ENCODE measurements at regions of chr1 and their contacts with region 1.

Region 1: GRCh38 chr1:43994897-43995335 is 3.5 kb downstream of the CCDC24 start:
- DNase-seq: no peak
- H3K4me3 ChIP-seq: no peak overlapping the region
- H3K27ac ChIP-seq: peak overlapping the region in 23 of 59 donors; percentile 10 to 78 (median 37)
- H3K27me3 ChIP-seq: no peaks in the 10 kb centered on the region
- CTCF ChIP-seq: peak in 24 of 56 donors; percentile 9 to 41 (median 22)

Region 2: DNA sequence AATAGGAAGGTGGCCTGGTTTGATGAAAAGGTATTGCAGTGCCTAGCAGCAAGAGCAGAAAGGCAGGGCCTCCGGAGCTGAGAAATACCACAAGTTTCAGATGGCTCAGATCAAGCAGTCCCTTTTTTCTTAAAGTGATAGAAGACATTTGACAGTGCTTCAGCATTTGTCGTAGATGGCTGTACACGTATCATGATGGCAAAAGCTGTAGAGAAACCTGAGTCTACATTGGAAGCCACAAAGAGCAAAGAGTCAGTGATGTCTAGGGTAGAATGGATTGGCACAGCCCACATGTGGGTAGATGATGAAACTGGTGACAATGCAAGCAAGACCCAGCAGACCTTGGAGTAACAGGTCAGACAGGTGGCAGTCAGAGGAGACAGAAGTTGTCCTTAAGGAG is 162.7 kb before region 1 on chr1:
- intact Hi-C with region 1: no loop called
- DNase-seq: no peak
- H3K4me3 ChIP-seq: no peak overlapping the region
- H3K27ac ChIP-seq: peak overlapping the region in 6 of 59 donors; percentile 0 to 12 (median 8)
- H3K27me3 ChIP-seq: no peaks in the 10 kb centered on the region
- CTCF ChIP-seq: no peak

Region 3: DNA sequence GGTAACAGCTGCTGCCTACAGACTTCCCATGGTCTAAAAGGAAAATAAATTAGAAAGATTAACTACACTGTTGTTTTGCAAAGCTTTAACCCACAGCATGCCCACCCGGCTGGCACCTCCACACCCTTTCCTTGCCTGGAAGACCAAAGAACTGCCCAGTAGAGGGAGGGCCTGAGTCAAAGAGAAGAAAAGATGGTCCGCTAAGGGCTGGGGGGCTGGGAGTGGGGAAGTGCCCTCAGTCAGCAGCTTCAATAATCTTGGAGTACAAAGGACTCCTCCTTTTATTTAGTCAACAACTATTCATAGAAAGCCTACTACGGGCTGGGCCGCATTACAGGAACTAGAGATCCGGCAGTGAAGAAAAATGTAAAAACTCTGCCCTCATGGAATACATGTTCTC is 319.5 kb after region 1 on chr1:
- intact Hi-C with region 1: loop called in 1 of 2 experiments (anchors 5 kb)
- DNase-seq: no peak
- H3K4me3 ChIP-seq: no peak overlapping the region
- H3K27ac ChIP-seq: no peak overlapping the region
- H3K27me3 ChIP-seq: no peaks in the 10 kb centered on the region
- CTCF ChIP-seq: peak in 4 of 56 donors; percentile 13 to 21 (median 16)